GM18951 (cell line): ENCODE measurements at regions of chr14 and their contacts with region 1.

Region 1: GRCh38 chr14:103067233-103067954 is 10.0 kb upstream of the CDC42BPB start:
- POLR2A ChIP-seq: no peak

Region 2: GRCh38 chr14:102694530-102695166 is 372.7 kb before region 1 on chr14:
- in situ Hi-C with region 1: loop called (anchors 10 kb)
- POLR2A ChIP-seq: no peak

Region 3: GRCh38 chr14:103104654-103105452 is 37.5 kb after region 1 on chr14:
- in situ Hi-C with region 1: no loop called
- POLR2A ChIP-seq: no peak

Region 4: DNA sequence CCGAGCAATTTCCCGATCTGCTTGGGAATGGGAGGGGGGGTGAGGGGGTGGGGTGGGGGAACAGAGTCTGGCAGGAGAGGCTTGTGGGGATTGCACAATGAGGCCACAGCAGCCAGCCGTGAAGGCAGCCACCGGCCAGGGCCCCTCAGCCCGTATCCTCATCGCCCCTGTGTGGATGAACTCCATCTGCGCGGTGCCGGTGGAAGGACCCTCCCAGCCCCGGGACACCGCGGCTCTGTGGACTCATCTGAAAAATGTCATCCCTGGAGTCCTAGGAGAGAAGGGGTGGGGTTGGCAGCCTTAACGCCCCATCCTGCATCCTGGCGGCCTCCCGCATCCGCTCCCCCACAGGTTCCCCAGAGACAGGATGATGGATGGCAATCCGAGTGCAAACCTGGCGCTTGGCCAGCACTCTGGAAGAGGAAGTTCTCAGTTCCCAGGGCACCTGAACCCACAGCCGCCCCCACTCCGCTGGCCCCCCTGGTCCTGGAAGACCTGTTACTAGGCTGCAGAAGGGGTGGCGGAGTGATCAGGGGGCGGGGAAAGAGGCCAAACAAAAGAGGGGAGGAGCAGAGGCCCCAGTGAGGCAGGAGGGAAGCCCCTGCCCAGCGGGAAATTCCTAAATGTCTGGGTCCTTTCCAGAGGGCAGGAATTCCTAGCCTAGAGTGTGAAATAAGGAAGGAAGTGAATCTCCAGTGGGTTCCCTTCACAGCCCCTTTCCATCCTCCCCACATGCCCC is 54.6 kb after region 1 on chr14:
- in situ Hi-C with region 1: no loop called
- POLR2A ChIP-seq: no peak

Region 5: DNA sequence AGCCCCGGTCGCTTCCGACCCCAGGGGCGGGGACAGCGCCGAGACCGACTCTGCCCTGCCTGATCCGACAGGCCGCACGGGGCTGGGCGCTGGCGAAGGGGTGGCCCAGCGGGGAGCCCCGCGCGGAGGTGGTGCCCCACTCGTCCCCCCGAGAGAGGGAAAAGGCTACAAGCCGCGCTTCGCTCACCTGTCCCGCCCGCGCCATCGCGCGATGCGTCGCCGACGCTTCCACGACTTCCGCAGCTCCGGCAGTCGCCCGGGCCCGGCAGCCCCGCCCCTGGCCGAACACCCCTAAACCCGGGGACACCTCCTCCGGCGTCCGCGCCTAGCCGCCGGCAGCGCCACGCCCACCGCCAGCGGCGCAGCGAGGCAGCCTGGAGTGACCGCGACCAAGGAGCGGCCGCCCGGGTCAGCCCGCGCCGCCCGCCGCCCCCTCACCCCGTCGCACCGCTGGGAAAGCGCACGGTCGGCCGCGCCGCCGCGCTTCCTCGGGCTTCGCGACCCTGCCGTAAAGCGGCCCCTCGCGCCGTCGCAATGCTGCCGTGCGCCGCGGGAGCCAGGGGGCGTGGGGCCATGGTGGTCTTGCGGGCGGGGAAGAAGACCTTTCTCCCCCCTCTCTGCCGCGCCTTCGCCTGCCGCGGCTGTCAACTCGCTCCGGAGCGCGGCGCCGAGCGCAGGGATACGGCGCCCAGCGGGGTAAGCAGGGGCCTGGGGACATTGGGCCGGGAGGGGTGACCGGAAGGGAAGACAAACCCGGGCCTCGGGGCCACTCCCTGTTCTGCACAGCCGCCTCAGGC is 495.2 kb after region 1 on chr14 and contains the starts of genes BAG5 and COA8:
- in situ Hi-C with region 1: no loop called
- POLR2A ChIP-seq: peak; percentile 75